Activated CD4-positive, alpha-beta T cell treated with anti-CD3 and anti-CD28 coated beads for 36 hours (primary cell): ENCODE measurements at regions of chr11 and their contacts with region 1.

Region 1: DNA sequence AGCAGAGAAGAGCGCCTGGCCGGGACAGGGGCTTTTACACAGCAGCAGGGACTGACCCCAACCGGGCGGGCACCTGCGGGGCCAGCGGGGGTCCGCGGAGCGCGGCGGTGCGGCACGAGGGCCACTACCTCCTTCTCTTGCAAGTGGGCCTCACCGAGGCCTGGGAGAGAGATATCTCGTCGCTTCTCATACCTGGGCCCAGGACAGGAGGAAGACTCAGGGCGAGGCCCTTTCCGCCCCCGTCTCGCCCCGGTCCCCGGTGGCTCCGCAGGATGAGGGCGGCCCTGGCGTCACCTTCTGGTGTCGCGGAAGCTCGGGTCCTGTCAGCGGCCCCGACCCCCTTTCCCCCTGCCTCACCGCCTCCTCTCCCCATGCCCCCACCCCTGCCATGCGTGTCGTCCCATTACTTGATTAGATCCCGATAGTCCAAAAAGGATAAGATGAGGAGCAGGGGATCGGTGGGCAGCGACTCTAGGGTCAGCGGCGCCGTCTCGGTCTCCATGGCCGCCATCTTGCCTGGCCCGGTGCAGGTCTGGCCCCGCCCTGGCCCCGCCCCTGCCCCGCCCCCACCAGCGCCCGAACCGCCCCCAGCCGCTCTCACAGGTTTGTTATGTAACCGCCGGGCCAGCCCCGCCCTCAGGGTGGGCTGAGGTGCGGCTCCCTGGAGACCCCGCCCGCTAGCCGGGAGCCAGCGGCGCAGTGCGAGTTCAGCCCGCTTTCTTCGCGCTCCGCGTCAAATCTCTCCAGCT is at the start of gene FBXO3:
- DNase-seq: peak; percentile 87
- ATAC-seq: peak; percentile 85
- H3K4me3 Mint-ChIP-seq: peak within 1 kb of the TSS; percentile 89
- H3K27ac Mint-ChIP-seq: peak within 1 kb of the TSS; percentile 75
- H3K4me1 Mint-ChIP-seq: peaks cover 44% of the 10 kb centered on the region
- H3K27me3 Mint-ChIP-seq: peaks cover 12% of the 10 kb centered on the region
- total RNA-seq, gene FBXO3: 11.4 to 12.2 TPM

Region 2: DNA sequence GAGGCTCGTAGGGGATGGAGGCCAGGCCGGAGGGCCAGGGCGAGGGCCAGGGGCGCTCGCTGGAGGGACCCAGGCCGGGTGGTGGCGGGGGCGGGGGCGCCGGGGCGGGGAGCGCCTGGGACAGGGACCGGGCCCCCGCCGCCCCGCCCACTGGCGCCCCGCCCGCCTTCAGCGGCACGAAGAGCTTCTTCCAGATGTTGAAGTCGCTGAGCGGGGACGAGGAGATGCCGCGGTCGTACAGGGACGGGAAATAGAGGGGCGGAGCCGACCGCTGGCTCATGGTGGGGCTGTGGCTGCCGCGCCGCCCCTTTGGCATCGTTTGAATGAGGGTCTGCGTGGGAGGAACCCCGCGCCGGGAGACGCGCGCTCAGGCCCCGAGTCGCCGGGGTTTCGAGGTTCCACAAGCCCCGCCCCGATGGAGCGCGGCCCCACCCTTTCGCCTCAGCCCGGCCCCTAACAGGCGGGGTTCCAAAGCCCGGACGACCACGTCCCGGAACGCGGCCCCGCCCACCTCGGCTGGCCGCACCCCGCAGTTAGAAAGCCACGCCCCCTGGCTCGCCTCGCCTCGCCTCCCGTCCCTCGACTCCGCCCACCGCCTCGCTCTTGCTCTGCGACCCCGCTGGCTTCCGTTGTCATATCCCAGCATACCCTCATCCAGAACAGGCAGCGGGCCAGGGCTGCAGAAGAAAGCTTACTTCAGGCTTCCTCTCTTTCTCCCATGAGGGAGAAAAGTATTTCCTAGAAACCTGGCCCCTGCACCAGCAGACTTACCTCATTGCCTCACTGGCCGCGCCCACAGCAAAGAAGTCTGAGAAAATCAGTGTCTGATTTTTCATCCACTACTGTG is 73.5 kb before region 1 on chr11 and contains the start of gene C11orf91:
- CTCF ChIA-PET with region 1: no interaction called
- POLR2A ChIA-PET with region 1: no interaction called
- intact Hi-C with region 1: loop called (anchors 1 to 2 kb)
- DNase-seq: peak; percentile 94
- ATAC-seq: peak; percentile 93
- H3K4me3 Mint-ChIP-seq: peak within 1 kb of the TSS; percentile 74
- H3K27ac Mint-ChIP-seq: peak within 1 kb of the TSS; percentile 45
- H3K4me1 Mint-ChIP-seq: peaks cover 18% of the 10 kb centered on the region
- H3K27me3 Mint-ChIP-seq: peaks cover 16% of the 10 kb centered on the region
- total RNA-seq, gene C11orf91: not detected

Region 3: GRCh38 chr11:34105079-34105956 is 331.2 kb after region 1 on chr11 and contains the start of gene NAT10:
- CTCF ChIA-PET with region 1: no interaction called
- POLR2A ChIA-PET with region 1: no interaction called
- intact Hi-C with region 1: loop called in 1 of 2 experiments (anchors 1 kb)
- DNase-seq: peak; percentile 98
- ATAC-seq: peak; percentile 93
- H3K4me3 Mint-ChIP-seq: peak within 1 kb of the TSS; percentile 97
- H3K27ac Mint-ChIP-seq: peak within 1 kb of the TSS; percentile 99
- H3K4me1 Mint-ChIP-seq: peaks cover 57% of the 10 kb centered on the region
- H3K27me3 Mint-ChIP-seq: no peaks in the 10 kb centered on the region
- total RNA-seq, gene NAT10: 142 to 147 TPM